ENCODE measurements at regions of chr4 and their contacts with region 1.

Region 1: DNA sequence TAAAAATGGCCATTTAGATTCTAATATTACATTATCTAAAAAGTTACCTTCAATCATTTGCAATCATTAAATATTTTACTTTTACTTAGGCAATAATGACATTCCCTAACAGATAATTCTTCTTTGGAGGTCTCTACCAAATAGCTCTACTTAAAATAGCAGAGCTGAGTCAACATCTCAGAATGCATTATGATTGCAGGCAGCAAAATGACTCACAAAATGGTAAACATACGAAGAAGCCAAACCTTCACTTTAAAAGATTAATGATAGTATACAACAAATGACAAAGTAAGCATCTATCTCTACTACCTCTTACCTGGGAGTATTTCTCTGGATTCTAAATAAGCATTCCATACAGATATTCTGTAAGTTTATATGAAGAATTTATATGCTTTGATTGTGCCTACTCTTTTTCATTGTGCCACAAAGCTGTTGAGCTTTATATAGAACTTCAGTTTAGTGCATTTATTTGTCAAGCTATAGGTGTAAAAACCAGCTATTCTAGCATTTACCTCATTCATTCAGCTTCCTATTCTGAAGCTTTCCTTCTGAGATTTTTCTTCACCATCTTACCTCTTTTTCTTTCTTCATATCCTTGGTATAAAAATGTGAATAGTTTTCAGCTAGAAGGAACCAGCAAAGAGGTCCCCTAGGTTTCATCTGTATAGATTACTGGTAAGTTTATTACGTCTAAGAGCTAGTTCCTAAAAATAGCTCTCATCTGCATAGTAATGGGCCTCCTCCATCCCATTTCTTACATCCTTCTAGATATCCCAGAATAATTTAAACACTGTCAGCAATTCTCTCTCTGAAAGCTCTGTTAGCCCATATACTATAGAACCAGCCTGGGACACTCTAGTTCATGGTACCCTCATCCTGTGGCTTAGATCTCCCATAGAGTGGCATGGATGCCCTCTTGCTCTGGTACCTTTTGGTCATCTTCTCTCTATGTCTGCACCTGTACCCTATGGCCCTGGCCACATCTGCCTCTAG is 17.2 kb upstream of the SPCS3 start:
- DNase-seq: no peak
- H3K4me3 ChIP-seq: no peak overlapping the region
- CTCF ChIP-seq: no peak
- POLR2A ChIP-seq: no peak

Region 2: DNA sequence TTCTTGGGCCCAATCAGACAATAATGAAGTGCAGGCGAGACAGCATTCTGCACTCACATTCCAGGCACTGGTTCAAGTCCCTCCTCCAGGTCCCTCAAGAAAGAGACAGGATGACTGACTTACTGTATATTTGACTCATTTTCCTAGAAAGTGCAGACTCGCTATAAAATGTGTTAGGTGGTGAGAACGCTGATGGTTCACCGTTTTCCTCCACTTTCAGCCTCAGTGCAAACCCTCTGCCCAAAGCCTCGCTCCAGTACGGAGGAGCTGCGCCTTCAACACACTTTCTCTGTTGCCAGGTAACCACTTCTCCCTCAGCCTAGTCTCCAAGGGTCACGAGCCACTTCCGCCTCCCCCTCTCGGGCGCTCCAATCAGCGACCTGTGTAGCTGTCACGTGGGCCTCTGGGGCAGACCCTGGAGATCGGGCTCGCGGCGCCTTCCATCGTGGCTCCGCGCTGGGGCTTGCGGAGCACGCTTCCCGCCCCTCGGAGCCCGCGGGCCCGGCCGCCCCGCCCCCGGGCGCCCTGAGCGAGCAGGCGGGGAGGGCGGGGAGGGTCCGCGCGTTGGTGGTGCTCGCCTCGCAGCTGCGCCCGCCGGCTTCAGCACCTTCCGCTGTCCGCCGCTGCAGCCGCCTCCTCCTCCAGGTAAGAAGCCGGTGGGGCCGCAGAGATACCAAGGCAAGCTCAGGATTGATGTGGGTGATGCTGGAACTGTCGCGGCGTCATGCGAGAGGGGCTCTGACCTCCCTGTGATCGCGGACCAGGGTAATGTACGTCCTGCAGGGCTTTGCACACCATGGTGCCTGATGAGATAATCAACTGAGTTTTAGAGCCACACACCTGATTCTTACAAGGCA is 236.9 kb before region 1 on chr4 and contains the start of gene WDR17:
- intact Hi-C with region 1: no loop called
- DNase-seq: peak; percentile 79 to 96
- H3K4me3 ChIP-seq: peak within 1 kb of the TSS; percentile 13
- CTCF ChIP-seq: no peak
- POLR2A ChIP-seq: no peak
- total RNA-seq, gene WDR17: 0.13 to 0.58 (median 0.32) TPM in 3 of 4 donors, not detected in the other

Region 3: DNA sequence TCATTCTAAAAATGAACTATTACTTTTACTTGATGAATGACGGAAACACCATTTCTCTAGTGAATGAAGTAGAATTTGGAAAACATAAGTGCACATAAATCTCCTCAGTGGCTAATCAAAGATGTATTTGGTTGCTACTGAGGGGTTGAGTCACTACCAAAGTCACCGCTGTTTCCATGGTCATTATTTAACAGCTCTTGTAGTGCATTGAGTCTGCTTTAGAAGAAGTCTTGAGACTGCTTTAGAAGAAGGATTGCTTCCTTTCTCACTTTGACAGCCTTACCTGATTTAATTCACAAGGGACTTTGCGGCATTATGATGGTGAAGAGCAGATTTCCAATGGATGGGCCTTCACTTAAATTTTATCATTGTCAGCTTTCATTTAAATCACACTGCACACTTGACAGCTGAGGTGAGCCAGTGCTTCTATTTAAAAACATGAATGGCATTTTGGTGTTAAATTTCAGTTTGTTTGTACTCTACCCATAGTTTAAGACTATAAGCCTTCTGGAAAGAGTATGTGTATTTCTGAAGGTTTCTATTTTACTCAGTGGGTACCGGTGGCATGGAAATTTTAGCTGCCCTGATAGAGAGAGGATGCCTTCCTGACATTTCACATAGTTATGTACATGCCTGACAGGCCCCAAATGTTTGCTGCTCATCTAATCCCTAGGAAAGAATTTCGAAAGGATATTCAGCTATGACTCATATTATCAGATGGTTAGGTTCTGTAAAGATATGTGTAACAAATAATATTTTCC is 43.1 kb before region 1 on chr4:
- intact Hi-C with region 1: no loop called
- DNase-seq: no peak
- H3K4me3 ChIP-seq: no peak overlapping the region
- CTCF ChIP-seq: no peak
- POLR2A ChIP-seq: no peak

Region 4: DNA sequence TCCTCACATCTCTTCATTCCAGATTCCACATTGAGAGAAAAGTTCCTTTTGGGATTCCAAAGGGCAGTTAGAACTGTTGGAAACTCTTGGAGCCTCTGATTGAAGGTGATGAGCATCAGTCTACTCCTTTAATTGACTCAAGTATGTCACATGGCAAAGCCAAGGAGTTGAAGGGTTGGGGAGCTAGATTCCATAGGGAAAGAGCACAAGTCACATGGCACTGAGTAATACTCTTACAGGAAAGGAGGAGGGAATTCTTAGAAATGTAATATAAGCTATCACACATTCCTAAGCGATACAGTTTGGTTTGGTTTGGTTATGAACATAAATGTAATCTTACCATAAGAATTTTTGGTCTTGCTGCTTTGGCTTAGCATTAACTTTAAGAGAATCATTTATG is 32.8 kb after region 1 on chr4:
- intact Hi-C with region 1: loop called (anchors 1 kb)
- DNase-seq: no peak
- H3K4me3 ChIP-seq: no peak overlapping the region
- CTCF ChIP-seq: no peak
- POLR2A ChIP-seq: no peak

Region 5: DNA sequence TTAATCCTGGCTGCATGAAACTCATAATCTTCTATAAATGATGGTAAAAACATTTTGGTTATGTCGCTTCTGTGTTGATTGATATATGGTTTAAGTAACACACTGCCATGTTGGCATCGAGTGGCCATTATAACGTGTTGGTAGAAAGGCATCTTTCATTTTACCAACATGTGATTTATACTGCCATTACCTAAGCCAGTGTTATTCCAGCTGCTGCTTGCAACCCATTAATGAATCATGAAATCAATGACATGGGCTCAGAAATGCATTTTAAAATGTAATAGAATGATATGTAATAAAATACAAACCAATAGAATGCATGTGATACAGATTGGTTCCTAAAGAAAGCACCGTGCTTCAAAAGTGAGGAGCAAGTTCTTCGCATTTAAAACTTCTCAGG is 388.1 kb after region 1 on chr4:
- intact Hi-C with region 1: no loop called
- DNase-seq: no peak
- H3K4me3 ChIP-seq: no peak overlapping the region
- CTCF ChIP-seq: no peak
- POLR2A ChIP-seq: no peak

Measured in lower leg skin (tissue), 4 donors.